Activated B cell treated with CpG ODN at 0.5 μM for 24 hours (primary cell): ENCODE measurements at regions of chr9 and their contacts with region 1.

Region 1: GRCh38 chr9:35732122-35732799 is at the starts of genes CREB3 and TLN1:
- DNase-seq: peak; percentile 94
- ATAC-seq: peak; percentile 86
- H3K4me3 Mint-ChIP-seq: peak within 1 kb of the TSS; percentile 32
- H3K27ac Mint-ChIP-seq: peak within 1 kb of the TSS; percentile 93
- H3K4me1 Mint-ChIP-seq: peaks cover 9% of the 10 kb centered on the region
- H3K27me3 Mint-ChIP-seq: no peaks in the 10 kb centered on the region
- CTCF ChIP-seq: no peak
- total RNA-seq, gene CREB3: 13.8 and 16.9 TPM in 2 replicates
- total RNA-seq, gene TLN1: 327 and 362 TPM in 2 replicates

Region 2: DNA sequence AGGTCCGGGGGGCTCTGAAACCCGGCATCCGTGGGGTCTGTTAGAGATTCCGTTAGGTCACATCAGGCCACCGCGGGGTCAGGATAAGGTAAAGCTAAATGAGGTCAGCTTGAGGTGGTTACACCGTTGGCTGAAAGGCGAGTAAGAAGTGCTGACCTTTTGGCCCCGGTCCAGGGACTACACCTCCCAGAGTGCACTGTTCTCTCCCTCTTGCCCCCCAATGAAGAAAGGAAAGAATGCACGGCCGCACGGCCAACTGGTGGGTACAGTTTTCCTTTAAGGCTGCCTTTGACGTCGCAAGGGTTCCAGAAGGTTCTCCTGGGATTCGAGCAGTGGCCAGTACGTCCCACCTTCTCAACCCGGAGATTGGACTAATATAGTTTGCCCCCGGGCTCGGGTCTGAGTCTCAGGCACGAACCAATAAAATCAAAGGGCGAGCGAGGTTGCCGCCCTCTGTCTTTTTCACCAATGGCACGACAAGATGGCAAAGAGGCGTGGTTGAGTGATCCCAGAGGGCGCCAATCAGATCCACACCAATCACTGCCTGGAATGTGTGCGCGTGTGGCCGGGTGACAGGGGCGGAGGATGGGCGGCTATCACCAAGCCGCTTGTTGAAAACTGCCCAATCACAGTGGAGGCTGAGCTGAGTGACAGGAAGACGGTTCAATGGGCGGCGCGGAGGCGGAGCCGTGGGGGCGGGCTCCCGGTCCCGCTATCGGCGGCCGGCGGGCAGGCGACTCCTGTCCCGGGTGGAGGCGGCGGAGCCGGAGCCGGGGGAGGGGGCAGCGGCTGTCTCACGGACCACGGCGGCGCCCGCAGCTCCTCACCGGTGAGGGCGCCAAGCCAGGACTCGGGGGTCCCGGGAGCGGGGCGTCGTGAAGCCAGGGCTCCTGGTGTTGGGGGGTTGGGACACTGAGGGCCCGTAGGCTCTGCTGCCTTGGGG is 743.0 kb before region 1 on chr9 and contains the start of gene DNAJB5:
- CTCF ChIA-PET with region 1: no interaction called
- POLR2A ChIA-PET with region 1: no interaction called
- intact Hi-C with region 1: loop called (anchors 5 kb)
- DNase-seq: peak; percentile 96
- ATAC-seq: peak; percentile 91
- H3K4me3 Mint-ChIP-seq: peak within 1 kb of the TSS; percentile 97
- H3K27ac Mint-ChIP-seq: peak within 1 kb of the TSS; percentile 92
- H3K4me1 Mint-ChIP-seq: peaks cover 77% of the 10 kb centered on the region
- H3K27me3 Mint-ChIP-seq: peaks cover 2% of the 10 kb centered on the region
- CTCF ChIP-seq: no peak
- total RNA-seq, gene DNAJB5: 5.4 and 6.4 TPM in 2 replicates

Region 3: DNA sequence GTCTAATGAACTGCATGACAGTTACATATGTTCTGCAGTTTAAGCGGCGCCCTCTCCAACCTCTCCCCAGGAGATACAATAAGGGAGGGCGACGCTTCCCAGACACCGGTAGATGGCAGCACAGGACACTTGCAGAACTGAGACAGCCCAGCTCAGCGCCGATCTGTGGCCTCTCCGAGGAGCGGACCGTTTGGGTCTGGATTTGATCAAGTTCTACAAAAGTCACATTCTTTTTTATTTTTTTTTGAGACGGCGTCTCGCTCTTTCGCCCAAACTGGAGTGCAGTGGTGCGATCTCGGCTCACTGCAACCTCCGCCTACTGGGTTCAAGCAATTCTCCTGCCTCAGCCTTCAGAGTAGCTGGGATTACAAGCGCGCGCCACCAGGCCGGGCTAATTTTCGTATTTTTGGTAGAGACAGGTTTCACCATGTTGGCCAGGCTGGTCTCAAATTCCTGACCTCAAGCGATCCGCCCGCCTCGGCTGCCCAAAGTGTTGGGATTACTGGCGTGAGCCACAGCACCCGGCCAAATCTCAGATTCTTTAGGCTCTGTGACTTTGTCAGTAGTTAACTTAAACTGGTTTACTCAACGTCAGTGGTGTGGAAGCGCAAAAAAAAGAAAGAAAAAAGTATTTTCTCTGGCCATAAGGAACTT is 615.2 kb before region 1 on chr9:
- CTCF ChIA-PET with region 1: no interaction called
- POLR2A ChIA-PET with region 1: no interaction called
- intact Hi-C with region 1: loop called (anchors 1 kb)
- DNase-seq: peak; percentile 60
- ATAC-seq: peak; percentile 62
- H3K4me3 Mint-ChIP-seq: peak overlapping the region; percentile 96
- H3K27ac Mint-ChIP-seq: peak overlapping the region; percentile 94
- H3K4me1 Mint-ChIP-seq: peaks cover 43% of the 10 kb centered on the region
- H3K27me3 Mint-ChIP-seq: no peaks in the 10 kb centered on the region
- CTCF ChIP-seq: peak; percentile 71

Region 4: DNA sequence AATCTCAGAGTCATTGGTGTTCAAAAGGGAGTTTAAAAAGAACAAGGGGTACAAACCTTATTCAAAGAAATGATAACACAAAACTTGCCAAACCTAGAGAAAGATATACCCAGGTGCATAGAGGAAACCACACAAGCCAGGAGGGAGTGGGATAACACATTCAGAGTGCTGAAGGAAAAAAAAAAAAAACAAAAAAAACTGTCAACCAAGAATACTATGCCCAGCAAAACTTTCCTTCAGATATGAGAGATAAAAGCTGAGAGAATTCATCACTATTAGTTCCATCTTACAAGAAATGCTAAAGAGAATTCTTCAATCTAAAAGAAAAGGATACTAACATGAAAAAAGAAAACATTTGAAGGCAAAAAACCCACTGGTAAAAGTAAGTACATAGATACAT is 138.7 kb before region 1 on chr9:
- CTCF ChIA-PET with region 1: no interaction called
- POLR2A ChIA-PET with region 1: no interaction called
- intact Hi-C with region 1: no loop called
- DNase-seq: no peak
- ATAC-seq: no peak
- H3K4me3 Mint-ChIP-seq: no peak overlapping the region
- H3K27ac Mint-ChIP-seq: no peak overlapping the region
- H3K4me1 Mint-ChIP-seq: peaks cover 3% of the 10 kb centered on the region
- H3K27me3 Mint-ChIP-seq: no peaks in the 10 kb centered on the region
- CTCF ChIP-seq: no peak

Region 5: GRCh38 chr9:35616681-35617459 is 115.4 kb before region 1 on chr9:
- CTCF ChIA-PET with region 1: interaction called, 15 read pairs
- POLR2A ChIA-PET with region 1: interaction called, 44 read pairs
- intact Hi-C with region 1: loop called (anchors 1 kb)
- DNase-seq: peak; percentile 64
- ATAC-seq: peak; percentile 8
- H3K4me3 Mint-ChIP-seq: peak overlapping the region; percentile 87
- H3K27ac Mint-ChIP-seq: peak overlapping the region; percentile 97
- H3K4me1 Mint-ChIP-seq: peaks cover 98% of the 10 kb centered on the region
- H3K27me3 Mint-ChIP-seq: no peaks in the 10 kb centered on the region
- CTCF ChIP-seq: no peak

Region 6: GRCh38 chr9:35696525-35697215 is 35.6 kb before region 1 on chr9:
- CTCF ChIA-PET with region 1: interaction called, 52 read pairs
- POLR2A ChIA-PET with region 1: interaction called, 8 read pairs
- intact Hi-C with region 1: loop called (anchors 2 kb)
- DNase-seq: peak; percentile 50
- ATAC-seq: peak; percentile 98
- H3K4me3 Mint-ChIP-seq: no peak overlapping the region
- H3K27ac Mint-ChIP-seq: peak overlapping the region; percentile 76
- H3K4me1 Mint-ChIP-seq: peaks cover 9% of the 10 kb centered on the region
- H3K27me3 Mint-ChIP-seq: no peaks in the 10 kb centered on the region
- CTCF ChIP-seq: no peak

Region 7: GRCh38 chr9:35756275-35757225 is 24.3 kb after region 1 on chr9:
- CTCF ChIA-PET with region 1: interaction called, 8 read pairs
- POLR2A ChIA-PET with region 1: interaction called, 26 read pairs
- intact Hi-C with region 1: loop called (anchors 1 kb)
- DNase-seq: peak; percentile 68
- ATAC-seq: peak; percentile 73
- H3K4me3 Mint-ChIP-seq: peak overlapping the region; percentile 91
- H3K27ac Mint-ChIP-seq: peak overlapping the region; percentile 93
- H3K4me1 Mint-ChIP-seq: peaks cover 55% of the 10 kb centered on the region
- H3K27me3 Mint-ChIP-seq: no peaks in the 10 kb centered on the region
- CTCF ChIP-seq: no peak

Region 8: GRCh38 chr9:35829084-35829763 is 97.0 kb after region 1 on chr9 and contains the start of gene TMEM8B:
- CTCF ChIA-PET with region 1: interaction called, 4 read pairs
- POLR2A ChIA-PET with region 1: interaction called, 4 read pairs
- intact Hi-C with region 1: loop called (anchors 1 kb)
- DNase-seq: peak; percentile 89
- ATAC-seq: peak; percentile 92
- H3K4me3 Mint-ChIP-seq: peak within 1 kb of the TSS; percentile 95
- H3K27ac Mint-ChIP-seq: peak within 1 kb of the TSS; percentile 86
- H3K4me1 Mint-ChIP-seq: peaks cover 34% of the 10 kb centered on the region
- H3K27me3 Mint-ChIP-seq: no peaks in the 10 kb centered on the region
- CTCF ChIP-seq: no peak
- total RNA-seq, gene TMEM8B: 5.0 and 8.0 TPM in 2 replicates